ENCODE measurements at regions of chr9 and their contacts with region 1.

Region 1: DNA sequence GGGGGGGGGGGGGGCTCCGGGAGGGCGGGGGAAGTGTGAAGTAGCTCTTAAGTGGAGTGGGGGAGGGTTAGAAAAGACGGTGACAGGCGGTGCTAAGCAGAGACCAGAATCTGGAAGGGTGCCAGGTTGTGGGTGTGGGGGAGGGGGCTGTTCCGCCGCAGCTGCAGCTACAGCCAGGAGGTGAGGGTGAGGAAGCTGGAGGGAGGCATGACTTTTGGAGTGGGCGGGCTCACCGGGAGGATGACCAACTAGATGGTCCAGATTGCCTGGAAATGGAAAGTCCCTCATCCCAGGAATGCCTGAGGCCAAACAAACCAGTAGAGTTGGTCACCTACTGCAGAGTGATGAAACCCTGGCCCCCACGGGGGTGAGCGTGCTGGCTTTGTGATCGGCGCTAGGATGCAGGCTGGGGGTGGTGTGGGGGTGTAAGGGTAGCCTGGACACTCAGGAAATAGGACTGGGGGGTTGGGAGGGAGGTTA is 158.1 kb upstream of the SHB start:
- DNase-seq: peak; percentile 92
- ATAC-seq: peak; percentile 64
- H3K4me3 ChIP-seq: peak overlapping the region; percentile 29; the same call in 1 of the 2 replicates
- H3K27ac ChIP-seq: peak overlapping the region; percentile 72
- H3K4me1 ChIP-seq: peaks cover 16% of the 10 kb centered on the region
- H3K27me3 ChIP-seq: no peaks in the 10 kb centered on the region
- CTCF ChIP-seq: no peak

Region 2: GRCh38 chr9:38178237-38178636 is 48.9 kb before region 1 on chr9:
- CTCF ChIA-PET with region 1: no interaction called
- POLR2A ChIA-PET with region 1: no interaction called
- intact Hi-C with region 1: loop called (anchors 10 kb)
- DNase-seq: peak; percentile 81
- ATAC-seq: peak; percentile 73
- H3K4me3 ChIP-seq: no peak overlapping the region
- H3K27ac ChIP-seq: peak overlapping the region; percentile 33; the same call in 1 of the 2 replicates
- H3K4me1 ChIP-seq: peaks cover 25% of the 10 kb centered on the region
- H3K27me3 ChIP-seq: no peaks in the 10 kb centered on the region
- CTCF ChIP-seq: no peak

Region 3: DNA sequence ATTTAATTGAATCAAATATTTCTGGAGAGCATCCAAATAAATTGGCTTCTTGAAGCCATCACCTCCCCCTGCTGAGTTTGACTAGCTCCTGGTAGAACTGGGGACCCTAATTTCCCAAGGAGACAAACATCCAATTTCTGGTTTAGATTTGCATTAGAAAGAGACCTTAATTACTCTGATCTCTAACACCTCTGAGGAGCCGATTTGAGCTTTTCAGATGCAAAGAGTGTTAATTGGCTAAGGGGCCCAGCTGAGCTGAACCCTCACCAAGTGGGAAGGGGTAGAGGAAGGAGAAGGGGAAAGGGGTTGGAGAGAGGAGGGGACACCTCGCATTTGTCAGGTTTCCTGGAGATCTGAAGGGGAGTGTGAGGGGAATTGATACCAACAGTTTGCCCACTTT is 12.7 kb before region 1 on chr9:
- CTCF ChIA-PET with region 1: no interaction called
- POLR2A ChIA-PET with region 1: interaction called, 10 read pairs
- intact Hi-C with region 1: no loop called
- DNase-seq: no peak
- ATAC-seq: no peak
- H3K4me3 ChIP-seq: no peak overlapping the region
- H3K27ac ChIP-seq: no peak overlapping the region
- H3K4me1 ChIP-seq: no peaks in the 10 kb centered on the region
- H3K27me3 ChIP-seq: no peaks in the 10 kb centered on the region
- CTCF ChIP-seq: no peak